Activated B cell treated with CpG ODN at 0.5 μM for 24 hours (primary cell): ENCODE measurements at regions of chr19 and their contacts with region 1.

Region 1: GRCh38 chr19:56170261-56170660 is 5.5 kb upstream of the GALP start:
- DNase-seq: no peak
- ATAC-seq: no peak
- H3K4me3 Mint-ChIP-seq: no peak overlapping the region
- H3K27ac Mint-ChIP-seq: no peak overlapping the region
- H3K4me1 Mint-ChIP-seq: peaks cover 2% of the 10 kb centered on the region
- H3K27me3 Mint-ChIP-seq: peaks cover 3% of the 10 kb centered on the region
- CTCF ChIP-seq: no peak

Region 2: DNA sequence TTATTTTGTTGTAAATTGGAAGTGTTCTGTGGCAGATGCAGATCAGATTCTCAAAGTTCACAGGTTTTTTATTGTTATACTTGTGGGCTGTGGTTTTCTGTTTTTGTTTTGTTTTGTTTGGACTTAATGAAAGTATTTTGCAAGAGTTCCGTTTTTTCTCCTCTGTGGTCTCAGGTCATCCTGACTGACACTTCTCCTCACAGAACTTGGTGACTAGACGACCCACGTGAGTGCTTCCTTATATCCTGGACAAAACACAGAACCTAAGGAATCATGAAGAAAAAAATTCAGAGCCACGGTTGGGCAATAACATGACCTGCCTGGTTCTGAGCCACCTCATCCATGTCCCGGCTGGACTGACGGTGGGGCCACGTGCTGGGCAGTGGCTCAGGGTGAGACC is 403.8 kb before region 1 on chr19:
- CTCF ChIA-PET with region 1: no interaction called
- POLR2A ChIA-PET with region 1: no interaction called
- intact Hi-C with region 1: no loop called
- DNase-seq: no peak
- ATAC-seq: no peak
- H3K4me3 Mint-ChIP-seq: no peak overlapping the region
- H3K27ac Mint-ChIP-seq: no peak overlapping the region
- H3K4me1 Mint-ChIP-seq: no peaks in the 10 kb centered on the region
- H3K27me3 Mint-ChIP-seq: peaks cover 22% of the 10 kb centered on the region
- CTCF ChIP-seq: no peak

Region 3: DNA sequence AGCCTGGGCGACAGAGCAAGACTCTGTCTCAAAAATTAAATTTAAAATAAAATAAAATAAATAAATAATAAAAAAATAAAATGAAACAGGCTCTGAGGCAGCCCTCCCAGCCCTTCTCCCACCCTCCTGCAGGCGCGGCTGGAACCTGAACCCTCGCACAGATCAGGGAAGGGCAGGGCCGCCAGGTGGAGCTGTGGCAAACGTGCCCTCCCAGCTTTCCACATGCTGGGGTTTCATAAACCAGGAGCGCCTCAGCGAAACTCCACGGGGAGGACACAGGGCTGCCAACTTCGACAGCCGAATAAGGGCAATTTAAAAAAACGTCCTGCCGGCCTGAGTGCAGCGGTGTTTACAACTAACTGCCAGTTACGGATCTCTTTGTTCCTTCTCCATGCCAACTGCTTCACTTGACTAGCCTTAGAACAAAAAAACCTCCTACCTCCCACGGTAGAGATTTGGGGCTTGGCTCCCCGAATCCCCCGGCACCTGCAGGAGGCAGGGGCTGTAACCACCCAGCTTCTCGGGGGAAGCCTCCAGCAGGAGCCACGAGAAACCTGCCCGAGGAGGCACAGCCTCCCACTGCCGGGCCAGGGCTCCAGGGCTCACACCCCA is 65.1 kb before region 1 on chr19:
- CTCF ChIA-PET with region 1: interaction called, 13 read pairs
- POLR2A ChIA-PET with region 1: no interaction called
- intact Hi-C with region 1: loop called (anchors 1 kb)
- DNase-seq: peak; percentile 49
- ATAC-seq: peak; percentile 68
- H3K4me3 Mint-ChIP-seq: peak overlapping the region; percentile 63
- H3K27ac Mint-ChIP-seq: peak overlapping the region; percentile 66
- H3K4me1 Mint-ChIP-seq: peaks cover 53% of the 10 kb centered on the region
- H3K27me3 Mint-ChIP-seq: no peaks in the 10 kb centered on the region
- CTCF ChIP-seq: no peak

Region 4: DNA sequence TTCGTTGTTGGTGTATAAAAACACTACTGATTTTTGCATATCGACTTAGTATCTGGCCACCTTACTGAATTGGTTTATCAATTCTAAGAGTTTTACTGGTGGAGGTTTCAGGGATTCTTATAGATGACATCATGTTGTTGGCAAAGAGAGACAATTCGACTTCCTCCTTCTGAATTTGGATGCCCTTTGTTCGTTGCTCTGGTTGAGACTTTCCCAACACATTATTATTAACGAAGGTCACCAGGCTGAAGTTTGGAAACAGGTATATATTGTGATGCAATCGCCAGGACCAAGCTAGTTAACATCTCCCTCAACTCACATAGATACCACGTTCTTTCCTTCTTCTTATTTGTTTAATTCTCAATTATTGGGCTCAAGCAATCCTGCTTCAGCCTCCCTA is 29.4 kb after region 1 on chr19:
- CTCF ChIA-PET with region 1: no interaction called
- POLR2A ChIA-PET with region 1: no interaction called
- intact Hi-C with region 1: no loop called
- DNase-seq: no peak
- ATAC-seq: no peak
- H3K4me3 Mint-ChIP-seq: no peak overlapping the region
- H3K27ac Mint-ChIP-seq: no peak overlapping the region
- H3K4me1 Mint-ChIP-seq: no peaks in the 10 kb centered on the region
- H3K27me3 Mint-ChIP-seq: peaks cover 4% of the 10 kb centered on the region
- CTCF ChIP-seq: no peak

Region 5: DNA sequence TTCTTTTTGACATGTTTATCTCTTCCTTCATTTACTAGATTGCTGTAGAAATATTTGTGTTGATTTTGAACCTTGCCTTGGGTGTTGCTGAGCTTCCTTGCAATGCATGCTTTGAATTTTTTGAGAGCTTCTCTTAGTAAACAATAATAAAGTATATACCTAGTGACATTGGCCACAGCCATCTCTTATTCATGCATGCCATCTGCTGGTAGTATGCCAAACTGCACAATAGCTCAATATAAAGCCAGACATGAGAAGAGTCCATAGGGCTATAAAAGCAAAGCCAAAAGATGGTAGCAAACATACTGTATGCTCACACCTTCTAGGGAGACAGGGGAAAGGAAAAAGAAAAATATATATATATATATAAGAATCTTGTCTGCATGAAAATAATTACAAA is 163.2 kb after region 1 on chr19:
- CTCF ChIA-PET with region 1: interaction called, 6 read pairs
- POLR2A ChIA-PET with region 1: interaction called, 3 read pairs
- intact Hi-C with region 1: loop called (anchors 1 kb)
- DNase-seq: no peak
- ATAC-seq: peak; percentile 73
- H3K4me3 Mint-ChIP-seq: no peak overlapping the region
- H3K27ac Mint-ChIP-seq: no peak overlapping the region
- H3K4me1 Mint-ChIP-seq: no peaks in the 10 kb centered on the region
- H3K27me3 Mint-ChIP-seq: peaks cover 3% of the 10 kb centered on the region
- CTCF ChIP-seq: peak; percentile 36